Activated naive CD4-positive, alpha-beta T cell treated with anti-CD3 and anti-CD28 coated beads for 36 hours (primary cell): ENCODE measurements at regions of chr18 and their contacts with region 1.

Region 1: DNA sequence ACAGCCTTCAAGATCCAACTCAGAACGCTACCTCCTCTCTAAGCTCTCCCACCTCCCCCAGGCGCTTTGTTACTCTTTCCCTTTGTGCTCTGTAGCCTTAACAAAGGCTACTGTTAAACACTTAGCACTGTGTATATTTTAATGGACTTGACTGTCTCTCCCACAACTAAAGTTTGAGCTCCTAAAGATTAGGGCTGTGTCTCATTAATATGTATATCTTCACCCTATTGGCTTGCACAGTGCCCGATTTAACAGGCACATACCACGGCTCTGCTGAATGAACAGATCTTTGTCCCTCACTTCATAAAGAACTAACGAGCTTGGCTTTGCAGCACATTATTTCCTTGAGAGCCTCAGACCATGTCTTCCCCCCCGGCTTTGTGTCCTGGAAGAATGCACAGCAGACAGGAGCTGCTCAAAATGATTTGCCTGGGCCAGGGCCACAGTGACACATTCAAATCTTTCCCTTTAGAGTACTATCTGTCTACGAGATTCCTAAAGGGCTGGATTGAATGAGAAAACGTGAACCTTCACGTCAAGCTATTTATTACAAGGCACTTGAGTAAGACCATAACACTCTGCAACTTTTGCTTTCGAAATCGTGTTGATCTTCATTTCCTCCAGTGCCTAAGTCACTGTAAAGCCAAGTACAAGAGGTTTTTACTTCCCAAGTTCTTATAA is 22.1 kb downstream of the ABHD3 start:
- DNase-seq: peak; percentile 34
- H3K4me3 Mint-ChIP-seq: no peak overlapping the region
- H3K27ac Mint-ChIP-seq: no peak overlapping the region
- H3K4me1 Mint-ChIP-seq: peaks cover 22% of the 10 kb centered on the region
- H3K27me3 Mint-ChIP-seq: no peaks in the 10 kb centered on the region

Region 2: GRCh38 chr18:21439446-21439846 is 243.1 kb before region 1 on chr18:
- CTCF ChIA-PET with region 1: no interaction called
- intact Hi-C with region 1: no loop called
- DNase-seq: no peak
- H3K4me3 Mint-ChIP-seq: no peak overlapping the region
- H3K27ac Mint-ChIP-seq: no peak overlapping the region
- H3K4me1 Mint-ChIP-seq: no peaks in the 10 kb centered on the region
- H3K27me3 Mint-ChIP-seq: peaks cover 18% of the 10 kb centered on the region

Region 3: GRCh38 chr18:21548637-21549036 is 133.9 kb before region 1 on chr18:
- CTCF ChIA-PET with region 1: no interaction called
- intact Hi-C with region 1: no loop called
- DNase-seq: no peak
- H3K4me3 Mint-ChIP-seq: no peak overlapping the region
- H3K27ac Mint-ChIP-seq: no peak overlapping the region
- H3K4me1 Mint-ChIP-seq: peaks cover 8% of the 10 kb centered on the region
- H3K27me3 Mint-ChIP-seq: no peaks in the 10 kb centered on the region

Region 4: GRCh38 chr18:21612125-21612991 is 70.2 kb before region 1 on chr18 and contains the start of gene SNRPD1:
- CTCF ChIA-PET with region 1: interaction called, 4 read pairs
- intact Hi-C with region 1: loop called (anchors 1 kb)
- DNase-seq: peak; percentile 89
- H3K4me3 Mint-ChIP-seq: peak within 1 kb of the TSS; percentile 96
- H3K27ac Mint-ChIP-seq: peak within 1 kb of the TSS; percentile 97
- H3K4me1 Mint-ChIP-seq: peaks cover 35% of the 10 kb centered on the region
- H3K27me3 Mint-ChIP-seq: no peaks in the 10 kb centered on the region
- total RNA-seq, gene SNRPD1: 133 to 144 TPM

Region 5: GRCh38 chr18:22185273-22185672 is 502.8 kb after region 1 on chr18:
- CTCF ChIA-PET with region 1: no interaction called
- intact Hi-C with region 1: no loop called
- DNase-seq: no peak
- H3K4me3 Mint-ChIP-seq: no peak overlapping the region
- H3K27ac Mint-ChIP-seq: no peak overlapping the region
- H3K4me1 Mint-ChIP-seq: no peaks in the 10 kb centered on the region
- H3K27me3 Mint-ChIP-seq: peaks cover 18% of the 10 kb centered on the region

Region 6: DNA sequence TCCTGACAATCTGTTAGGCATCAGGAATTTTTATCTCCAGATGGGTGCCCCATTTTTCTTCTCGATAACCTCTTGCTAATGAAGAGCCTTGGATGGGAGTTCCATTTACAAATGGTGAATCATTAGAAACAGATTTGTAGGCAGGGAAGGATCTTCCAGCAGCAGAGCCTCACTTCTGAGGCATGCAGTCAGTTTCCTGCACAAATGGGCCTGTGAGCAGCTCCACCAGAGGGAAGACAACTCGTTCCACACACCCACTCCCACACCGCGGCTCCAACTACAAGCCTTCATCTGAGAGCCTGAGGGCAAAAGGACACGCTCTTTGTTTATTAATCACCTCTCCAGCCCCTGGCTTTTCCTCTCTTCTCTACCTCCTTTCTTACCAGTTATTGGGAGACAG is 626.7 kb after region 1 on chr18:
- CTCF ChIA-PET with region 1: no interaction called
- intact Hi-C with region 1: no loop called
- DNase-seq: no peak
- H3K4me3 Mint-ChIP-seq: no peak overlapping the region
- H3K27ac Mint-ChIP-seq: no peak overlapping the region
- H3K4me1 Mint-ChIP-seq: no peaks in the 10 kb centered on the region
- H3K27me3 Mint-ChIP-seq: no peaks in the 10 kb centered on the region